Activated CD4-positive, alpha-beta memory T cell treated with anti-CD3 and anti-CD28 coated beads, Interleukin-2, amount 10 ng/mL, durations not matched to agents 7 days and 5 days (primary cell): ENCODE measurements at regions of chr20 and their contacts with region 1.

Region 1: GRCh38 chr20:1108437-1108920 is 9.9 kb upstream of the PSMF1 start:
- DNase-seq: peak; percentile 57
- H3K4me3 Mint-ChIP-seq: no peak overlapping the region
- H3K27ac Mint-ChIP-seq: no peak overlapping the region
- H3K4me1 Mint-ChIP-seq: no peaks in the 10 kb centered on the region
- H3K27me3 Mint-ChIP-seq: no peaks in the 10 kb centered on the region

Region 2: DNA sequence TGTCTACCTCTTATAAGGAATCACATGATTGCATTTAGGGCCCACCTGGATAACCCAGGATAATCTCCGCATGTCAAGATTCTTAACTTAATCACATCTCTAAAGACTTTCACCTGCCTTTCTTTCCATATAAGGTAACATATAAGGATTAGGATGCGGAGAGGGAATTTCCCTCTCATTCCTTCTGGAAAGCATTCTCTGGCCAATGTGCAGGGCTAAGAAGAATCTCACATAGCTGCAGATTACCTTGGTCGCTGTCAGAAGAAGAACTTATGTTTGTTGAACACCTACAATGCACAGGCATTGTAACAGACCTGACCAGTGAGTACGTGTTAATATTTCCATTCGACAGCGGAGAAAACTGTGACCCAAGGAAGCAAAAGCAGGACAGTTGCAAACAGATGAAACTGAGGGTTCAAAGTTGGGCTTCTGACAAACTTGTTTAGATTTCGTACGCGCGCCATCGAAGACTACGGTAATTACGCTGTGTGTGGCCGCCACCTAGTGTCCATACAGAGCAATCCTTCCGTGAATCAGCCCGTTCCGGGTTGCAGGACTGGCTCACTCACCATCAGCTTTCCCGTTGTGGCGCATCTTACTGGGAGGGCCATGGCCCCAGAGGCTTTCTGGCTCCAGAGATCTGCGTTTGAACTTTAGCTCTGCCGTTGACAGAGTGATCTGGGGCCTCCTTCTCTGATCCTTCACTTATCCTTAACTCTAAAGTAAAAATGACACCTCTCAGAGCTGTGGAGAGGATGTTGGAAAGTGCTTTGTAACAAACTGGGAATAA is 104.3 kb after region 1 on chr20:
- CTCF ChIA-PET with region 1: interaction called, 22 read pairs
- POLR2A ChIA-PET with region 1: no interaction called
- DNase-seq: peak; percentile 77
- H3K4me3 Mint-ChIP-seq: no peak overlapping the region
- H3K27ac Mint-ChIP-seq: no peak overlapping the region
- H3K4me1 Mint-ChIP-seq: peaks cover 34% of the 10 kb centered on the region
- H3K27me3 Mint-ChIP-seq: peaks cover 16% of the 10 kb centered on the region